ENCODE measurements at regions of chr11 and their contacts with region 1.

Region 1: GRCh38 chr11:120303004-120303637 is 22.0 kb upstream of the TLCD5 start:
- DNase-seq: peak; percentile 82
- ATAC-seq: peak; percentile 81
- H3K4me3 ChIP-seq: no peak overlapping the region
- H3K27ac ChIP-seq: no peak overlapping the region
- H3K4me1 ChIP-seq: peaks cover 20 to 70% of the 10 kb centered on the region in 2 experiments
- H3K27me3 ChIP-seq: no peaks in the 10 kb centered on the region
- CTCF ChIP-seq: peak; percentile 99 to 100 (median 99)
- POLR2A ChIP-seq: no peak
- RAD21 ChIP-seq: peak; percentile 84

Region 2: GRCh38 chr11:120178561-120179056 is 124.5 kb before region 1 on chr11:
- CTCF ChIA-PET with region 1: interaction called, 10 read pairs
- POLR2A ChIA-PET with region 1: no interaction called
- RAD21 ChIA-PET with region 1: no interaction called
- intact Hi-C with region 1: no loop called
- DNase-seq: no peak
- ATAC-seq: no peak
- H3K4me3 ChIP-seq: no peak overlapping the region
- H3K27ac ChIP-seq: no peak overlapping the region
- H3K4me1 ChIP-seq: peaks cover 0 to 17% of the 10 kb centered on the region in 2 experiments; a peak in 1 of 4 replicates
- H3K27me3 ChIP-seq: peaks cover 36% of the 10 kb centered on the region
- CTCF ChIP-seq: no peak
- POLR2A ChIP-seq: no peak
- RAD21 ChIP-seq: no peak

Region 3: GRCh38 chr11:120248551-120249278 is 54.4 kb before region 1 on chr11:
- CTCF ChIA-PET with region 1: interaction called, 11 read pairs
- POLR2A ChIA-PET with region 1: interaction called, 5 read pairs
- RAD21 ChIA-PET with region 1: interaction called in 1 of 2 experiments, 4 read pairs
- intact Hi-C with region 1: no loop called
- DNase-seq: peak; percentile 56
- ATAC-seq: peak; percentile 55
- H3K4me3 ChIP-seq: peak overlapping the region in 1 of 2 experiments; percentile 22; a peak in 2 of 4 replicates
- H3K27ac ChIP-seq: no peak overlapping the region
- H3K4me1 ChIP-seq: peaks cover 12 to 22% of the 10 kb centered on the region in 2 experiments; a peak in 3 of 4 replicates
- H3K27me3 ChIP-seq: peaks cover 5% of the 10 kb centered on the region; the same call in 1 of the 2 replicates
- CTCF ChIP-seq: no peak
- POLR2A ChIP-seq: no peak
- RAD21 ChIP-seq: peak; percentile 15; the same call in 1 of the 2 replicates

Region 4: DNA sequence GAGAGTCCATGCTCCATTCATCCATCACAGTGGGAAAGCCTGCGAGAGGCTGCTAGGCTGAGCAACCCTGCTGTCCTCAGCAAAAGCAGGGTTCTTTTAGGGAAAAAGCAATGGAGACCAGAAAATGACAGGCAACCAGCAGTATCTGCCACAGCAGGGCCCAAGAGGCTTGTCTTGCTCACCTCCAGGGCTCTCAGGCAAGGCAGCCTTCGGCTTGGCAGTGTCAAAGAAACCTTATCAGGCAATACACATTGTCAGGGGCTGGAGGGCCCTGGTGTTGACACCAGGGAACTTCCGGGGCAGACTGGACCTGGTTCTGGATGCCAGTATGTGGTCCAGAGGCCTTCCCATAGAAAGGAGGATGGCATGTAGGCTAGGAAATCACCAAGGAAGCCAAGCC is 11.7 kb after region 1 on chr11:
- CTCF ChIA-PET with region 1: interaction called, 13 read pairs
- POLR2A ChIA-PET with region 1: no interaction called
- RAD21 ChIA-PET with region 1: no interaction called
- intact Hi-C with region 1: no loop called
- DNase-seq: no peak
- ATAC-seq: no peak
- H3K4me3 ChIP-seq: no peak overlapping the region
- H3K27ac ChIP-seq: no peak overlapping the region
- H3K4me1 ChIP-seq: peaks cover 20 to 31% of the 10 kb centered on the region in 2 experiments
- H3K27me3 ChIP-seq: no peaks in the 10 kb centered on the region
- CTCF ChIP-seq: no peak
- POLR2A ChIP-seq: no peak
- RAD21 ChIP-seq: no peak